Mammary epithelial cell (primary cell): ENCODE measurements at regions of chr17 and their contacts with region 1.

Region 1: DNA sequence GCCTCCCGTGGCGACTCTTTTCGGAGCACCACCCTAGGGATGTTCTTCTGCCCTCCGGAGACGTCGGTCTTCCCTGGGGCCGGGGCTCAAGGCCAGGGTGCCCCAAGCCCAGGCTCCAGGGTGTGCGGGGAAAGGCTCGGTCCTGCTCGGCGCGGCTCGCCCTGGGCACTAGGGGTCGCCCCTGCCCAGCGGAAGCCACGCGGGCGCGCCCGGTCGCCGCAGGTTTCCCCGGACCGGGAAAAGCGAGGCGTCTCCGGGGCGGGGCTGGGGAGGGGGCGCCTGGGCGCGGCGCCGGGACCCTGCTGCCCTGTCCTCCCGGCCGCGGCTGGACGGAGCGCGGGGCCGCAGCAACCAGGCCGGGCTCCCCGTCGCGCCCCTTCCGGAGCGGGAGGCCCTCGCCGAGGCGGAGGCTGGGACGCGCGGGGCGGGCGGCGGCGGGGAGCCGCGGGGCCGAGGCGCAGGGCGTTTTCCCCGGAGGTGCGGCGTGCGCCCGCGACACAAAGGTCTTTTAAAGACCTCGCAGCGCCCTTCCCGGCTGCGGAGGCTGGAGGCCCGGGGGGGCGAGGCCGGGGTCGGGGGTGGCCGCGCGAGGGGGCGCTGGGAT is 76.4 kb downstream of the MRC2 start:
- DNase-seq: peak; percentile 69
- H3K4me3 ChIP-seq: peak overlapping the region; percentile 58 to 79 (median 68)
- H3K27ac ChIP-seq: peak overlapping the region; percentile 91
- H3K4me1 ChIP-seq: peaks cover 21% of the 10 kb centered on the region
- H3K27me3 ChIP-seq: no peaks in the 10 kb centered on the region
- CTCF ChIP-seq: peak; percentile 42 to 84

Region 2: GRCh38 chr17:62739645-62740388 is 35.9 kb after region 1 on chr17:
- CTCF ChIA-PET with region 1: no interaction called
- dilution Hi-C with region 1: no loop called
- in situ Hi-C with region 1: no loop called
- intact Hi-C with region 1: no loop called
- DNase-seq: no peak
- H3K4me3 ChIP-seq: no peak overlapping the region
- H3K27ac ChIP-seq: no peak overlapping the region
- H3K4me1 ChIP-seq: peaks cover 17% of the 10 kb centered on the region
- H3K27me3 ChIP-seq: no peaks in the 10 kb centered on the region
- CTCF ChIP-seq: no peak

Region 3: GRCh38 chr17:62761917-62762316 is 58.0 kb after region 1 on chr17:
- CTCF ChIA-PET with region 1: interaction called, 3 read pairs
- dilution Hi-C with region 1: no loop called
- in situ Hi-C with region 1: no loop called
- intact Hi-C with region 1: loop called (anchors 5 kb)
- DNase-seq: peak; percentile 95
- H3K4me3 ChIP-seq: no peak overlapping the region
- H3K27ac ChIP-seq: no peak overlapping the region
- H3K4me1 ChIP-seq: peaks cover 12% of the 10 kb centered on the region
- H3K27me3 ChIP-seq: no peaks in the 10 kb centered on the region
- CTCF ChIP-seq: no peak

Region 4: DNA sequence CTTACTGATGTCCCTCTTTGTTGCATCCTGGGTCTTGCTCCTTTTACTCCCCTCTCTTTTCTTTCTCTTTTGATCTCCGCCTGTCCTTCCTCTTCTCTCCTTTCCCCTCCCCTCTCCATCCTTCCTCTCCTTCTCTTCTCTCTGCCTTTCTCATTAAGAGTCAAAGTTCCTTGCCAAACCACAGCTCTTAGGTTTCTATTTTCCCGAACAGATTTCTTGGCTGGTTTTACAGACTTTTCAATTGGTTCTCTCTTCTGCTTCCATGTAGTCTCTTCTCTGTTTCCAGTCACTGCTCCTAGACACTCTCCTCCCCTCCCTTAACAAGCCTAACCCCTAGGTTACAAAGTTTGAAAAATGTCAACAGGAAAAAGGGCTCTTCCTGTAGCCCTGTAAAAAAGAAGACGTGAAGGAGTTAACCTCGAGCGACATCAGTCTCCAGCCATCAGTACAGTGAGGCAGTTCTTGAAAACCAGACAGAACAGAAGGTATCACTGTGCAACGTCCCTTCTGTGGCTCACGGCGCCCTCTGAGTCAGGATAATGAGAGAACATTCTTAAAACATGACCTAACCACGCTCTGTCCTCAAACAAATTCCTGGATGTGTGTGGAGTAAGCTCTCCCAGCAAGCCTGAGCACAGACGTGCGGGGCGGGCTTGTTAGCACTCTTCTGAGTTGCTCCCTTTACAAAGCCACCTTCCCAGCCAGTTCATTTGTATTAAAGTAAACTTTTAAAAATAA is 115.8 kb after region 1 on chr17:
- CTCF ChIA-PET with region 1: no interaction called
- dilution Hi-C with region 1: no loop called
- in situ Hi-C with region 1: no loop called
- intact Hi-C with region 1: loop called (anchors 1 kb)
- DNase-seq: peak; percentile 98
- H3K4me3 ChIP-seq: peak overlapping the region in 2 of 3 experiments; percentile 5 to 20
- H3K27ac ChIP-seq: peak overlapping the region; percentile 97
- H3K4me1 ChIP-seq: peaks cover 59% of the 10 kb centered on the region
- H3K27me3 ChIP-seq: no peaks in the 10 kb centered on the region
- CTCF ChIP-seq: no peak

Region 5: DNA sequence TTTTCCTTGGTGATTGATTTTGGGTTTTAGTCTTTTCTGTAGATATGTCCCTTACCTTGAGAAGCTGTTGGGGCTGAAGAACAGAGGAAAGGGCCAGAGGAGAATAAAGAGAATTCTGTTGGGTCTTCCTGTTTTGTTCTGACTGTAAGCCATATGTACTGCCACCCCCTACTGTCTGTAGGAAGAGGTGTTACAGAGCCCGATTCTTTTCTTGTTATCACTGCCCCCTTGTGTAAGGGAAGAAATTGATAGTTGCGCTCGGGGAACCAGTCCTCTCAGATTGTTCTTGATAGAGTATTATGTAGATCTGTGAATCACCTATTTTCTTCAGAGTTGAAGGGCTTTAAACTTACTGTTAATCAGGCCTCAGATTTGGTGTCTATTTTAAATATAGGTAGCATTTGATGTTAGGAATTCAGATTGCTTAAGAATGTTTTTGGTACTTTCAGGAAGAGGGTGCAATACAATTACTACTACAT is 264.6 kb after region 1 on chr17:
- CTCF ChIA-PET with region 1: interaction called, 4 read pairs
- dilution Hi-C with region 1: no loop called
- in situ Hi-C with region 1: loop called in 1 of 2 experiments (anchors 5 kb)
- intact Hi-C with region 1: loop called (anchors 1 kb)
- DNase-seq: peak; percentile 86
- H3K4me3 ChIP-seq: peak overlapping the region; percentile 85 to 90 (median 90)
- H3K27ac ChIP-seq: peak overlapping the region; percentile 83
- H3K4me1 ChIP-seq: peaks cover 12% of the 10 kb centered on the region
- H3K27me3 ChIP-seq: no peaks in the 10 kb centered on the region
- CTCF ChIP-seq: peak; percentile 94 to 96

Region 6: GRCh38 chr17:63191610-63192009 is 487.7 kb after region 1 on chr17:
- CTCF ChIA-PET with region 1: no interaction called
- dilution Hi-C with region 1: no loop called
- in situ Hi-C with region 1: no loop called
- intact Hi-C with region 1: loop called (anchors 10 kb)
- DNase-seq: no peak
- H3K4me3 ChIP-seq: no peak overlapping the region
- H3K27ac ChIP-seq: no peak overlapping the region
- H3K4me1 ChIP-seq: peaks cover 8% of the 10 kb centered on the region
- H3K27me3 ChIP-seq: no peaks in the 10 kb centered on the region
- CTCF ChIP-seq: no peak

Region 7: DNA sequence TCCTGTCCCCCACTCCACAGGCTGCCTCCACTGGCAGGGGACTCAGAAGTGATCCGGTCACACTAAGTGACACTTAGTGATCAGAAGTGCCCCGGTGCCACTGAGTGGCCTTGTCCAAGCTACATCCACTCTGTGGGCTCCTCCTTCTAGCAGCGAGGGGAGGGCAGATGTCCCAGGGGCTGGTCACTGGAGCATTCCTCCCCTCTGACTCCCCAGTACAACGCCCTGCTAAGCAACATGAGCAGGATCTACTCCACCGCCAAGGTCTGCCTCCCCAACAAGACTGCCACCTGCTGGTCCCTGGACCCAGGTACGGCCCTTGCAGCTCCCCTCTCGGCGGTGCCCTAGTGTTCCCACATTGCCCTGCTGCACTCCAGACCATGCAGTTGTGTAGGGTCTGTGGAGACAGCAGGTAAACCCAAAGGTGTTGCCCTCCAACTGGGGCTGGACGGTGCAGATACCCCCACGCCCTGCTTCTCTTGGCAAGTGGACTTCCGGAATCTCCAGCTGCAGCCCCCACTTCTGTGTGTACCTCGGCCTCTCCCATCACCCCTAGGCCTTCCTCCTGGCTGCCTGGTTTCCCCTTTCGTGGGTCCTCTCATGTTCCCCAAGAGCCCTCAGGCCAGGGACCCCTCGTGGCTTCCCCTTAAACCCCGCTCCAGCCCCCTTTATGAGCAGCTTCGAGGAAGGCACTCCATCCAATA is 775.1 kb after region 1 on chr17:
- CTCF ChIA-PET with region 1: no interaction called
- dilution Hi-C with region 1: no loop called
- in situ Hi-C with region 1: no loop called
- intact Hi-C with region 1: loop called (anchors 1 kb)
- DNase-seq: peak; percentile 81
- H3K4me3 ChIP-seq: no peak overlapping the region
- H3K27ac ChIP-seq: no peak overlapping the region
- H3K4me1 ChIP-seq: peaks cover 17% of the 10 kb centered on the region
- H3K27me3 ChIP-seq: peaks cover 5% of the 10 kb centered on the region
- CTCF ChIP-seq: peak; percentile 90 to 98